ENCODE measurements at regions of chr9 and their contacts with region 1.

Region 1: GRCh38 chr9:128296337-128297220 is 20.5 kb downstream of the SWI5 start:
- DNase-seq: no peak
- ATAC-seq: no peak
- H3K4me3 ChIP-seq: no peak overlapping the region
- H3K27ac ChIP-seq: no peak overlapping the region
- H3K4me1 ChIP-seq: peaks cover 5 to 29% of the 10 kb centered on the region in 2 experiments; a peak in 3 of 4 replicates
- H3K27me3 ChIP-seq: no peaks in the 10 kb centered on the region
- CTCF ChIP-seq: no peak
- POLR2A ChIP-seq: no peak
- RAD21 ChIP-seq: no peak

Region 2: GRCh38 chr9:128339771-128340690 is 43.5 kb after region 1 on chr9 and contains the start of gene SLC27A4:
- CTCF ChIA-PET with region 1: interaction called, 40 read pairs
- POLR2A ChIA-PET with region 1: interaction called, 9 read pairs
- RAD21 ChIA-PET with region 1: interaction called, 3 to 6 read pairs
- intact Hi-C with region 1: loop called (anchors 1 kb)
- DNase-seq: peak; percentile 71
- ATAC-seq: peak; percentile 87
- H3K4me3 ChIP-seq: peak within 1 kb of the TSS; percentile 84 to 86
- H3K27ac ChIP-seq: peak within 1 kb of the TSS; percentile 74
- H3K4me1 ChIP-seq: peaks cover 0 to 20% of the 10 kb centered on the region in 2 experiments; a peak in 2 of 4 replicates
- H3K27me3 ChIP-seq: no peaks in the 10 kb centered on the region
- CTCF ChIP-seq: no peak
- POLR2A ChIP-seq: no peak
- RAD21 ChIP-seq: no peak
- total RNA-seq, gene SLC27A4: 33.9 TPM

Region 3: GRCh38 chr9:128370826-128371621 is 74.4 kb after region 1 on chr9 and contains the start of gene URM1:
- CTCF ChIA-PET with region 1: interaction called, 15 read pairs
- POLR2A ChIA-PET with region 1: no interaction called
- RAD21 ChIA-PET with region 1: no interaction called
- intact Hi-C with region 1: no loop called
- DNase-seq: peak; percentile 88
- ATAC-seq: peak; percentile 89
- H3K4me3 ChIP-seq: peak within 1 kb of the TSS; percentile 67 to 91
- H3K27ac ChIP-seq: peak within 1 kb of the TSS; percentile 79
- H3K4me1 ChIP-seq: peaks cover 13 to 16% of the 10 kb centered on the region in 2 experiments; a peak in 3 of 4 replicates
- H3K27me3 ChIP-seq: no peaks in the 10 kb centered on the region
- CTCF ChIP-seq: no peak
- POLR2A ChIP-seq: peak; percentile 74
- RAD21 ChIP-seq: no peak
- total RNA-seq, gene URM1: 51.6 TPM

Region 4: DNA sequence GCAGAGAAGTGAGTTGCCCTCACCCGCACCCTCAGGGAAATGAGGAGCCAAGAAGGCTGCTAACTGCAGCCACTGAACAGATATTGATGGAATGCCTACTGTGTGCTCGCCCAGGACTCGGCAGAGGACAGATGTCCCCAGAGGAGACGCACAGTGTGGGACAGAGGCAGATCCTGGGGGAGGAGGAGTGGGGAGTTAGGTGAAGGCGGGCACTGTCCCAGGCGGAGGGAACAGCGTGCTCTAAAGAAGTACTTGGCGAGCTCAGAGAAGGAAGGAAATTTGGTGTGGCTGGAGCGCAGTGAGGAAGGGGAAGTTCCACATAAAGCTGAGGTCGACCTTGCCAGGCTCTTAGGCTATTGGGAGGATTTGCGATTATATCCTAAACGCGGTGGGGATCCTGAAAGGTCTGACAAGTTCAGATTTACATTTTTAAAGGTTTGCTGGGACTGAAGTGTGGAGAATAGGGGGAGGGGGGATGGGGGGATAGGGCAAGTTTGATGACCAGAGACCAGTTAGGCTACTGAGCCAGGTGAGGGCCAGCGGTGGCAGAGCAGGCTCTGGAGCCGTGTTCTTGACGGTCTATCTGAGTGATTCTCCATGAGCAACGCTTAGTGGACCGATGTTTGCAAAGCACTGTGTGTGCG is 100.5 kb after region 1 on chr9:
- CTCF ChIA-PET with region 1: no interaction called
- POLR2A ChIA-PET with region 1: no interaction called
- RAD21 ChIA-PET with region 1: no interaction called
- intact Hi-C with region 1: no loop called
- DNase-seq: no peak
- ATAC-seq: no peak
- H3K4me3 ChIP-seq: no peak overlapping the region
- H3K27ac ChIP-seq: no peak overlapping the region
- H3K4me1 ChIP-seq: peaks cover 0 to 14% of the 10 kb centered on the region in 2 experiments; a peak in 2 of 4 replicates
- H3K27me3 ChIP-seq: no peaks in the 10 kb centered on the region
- CTCF ChIP-seq: no peak
- POLR2A ChIP-seq: no peak
- RAD21 ChIP-seq: no peak

Region 5: GRCh38 chr9:128420060-128420650 is 123.6 kb after region 1 on chr9:
- CTCF ChIA-PET with region 1: interaction called, 10 read pairs
- POLR2A ChIA-PET with region 1: interaction called, 4 read pairs
- RAD21 ChIA-PET with region 1: interaction called in 1 of 2 experiments, 3 read pairs
- intact Hi-C with region 1: no loop called
- DNase-seq: no peak
- ATAC-seq: peak; percentile 81
- H3K4me3 ChIP-seq: peak overlapping the region; percentile 79 to 93
- H3K27ac ChIP-seq: peak overlapping the region; percentile 78
- H3K4me1 ChIP-seq: peaks cover 31 to 51% of the 10 kb centered on the region in 2 experiments
- H3K27me3 ChIP-seq: no peaks in the 10 kb centered on the region
- CTCF ChIP-seq: peak in 2 of 3 experiments; percentile 78 to 80; a peak in 4 of 6 replicates
- POLR2A ChIP-seq: peak; percentile 18
- RAD21 ChIP-seq: no peak

Region 6: DNA sequence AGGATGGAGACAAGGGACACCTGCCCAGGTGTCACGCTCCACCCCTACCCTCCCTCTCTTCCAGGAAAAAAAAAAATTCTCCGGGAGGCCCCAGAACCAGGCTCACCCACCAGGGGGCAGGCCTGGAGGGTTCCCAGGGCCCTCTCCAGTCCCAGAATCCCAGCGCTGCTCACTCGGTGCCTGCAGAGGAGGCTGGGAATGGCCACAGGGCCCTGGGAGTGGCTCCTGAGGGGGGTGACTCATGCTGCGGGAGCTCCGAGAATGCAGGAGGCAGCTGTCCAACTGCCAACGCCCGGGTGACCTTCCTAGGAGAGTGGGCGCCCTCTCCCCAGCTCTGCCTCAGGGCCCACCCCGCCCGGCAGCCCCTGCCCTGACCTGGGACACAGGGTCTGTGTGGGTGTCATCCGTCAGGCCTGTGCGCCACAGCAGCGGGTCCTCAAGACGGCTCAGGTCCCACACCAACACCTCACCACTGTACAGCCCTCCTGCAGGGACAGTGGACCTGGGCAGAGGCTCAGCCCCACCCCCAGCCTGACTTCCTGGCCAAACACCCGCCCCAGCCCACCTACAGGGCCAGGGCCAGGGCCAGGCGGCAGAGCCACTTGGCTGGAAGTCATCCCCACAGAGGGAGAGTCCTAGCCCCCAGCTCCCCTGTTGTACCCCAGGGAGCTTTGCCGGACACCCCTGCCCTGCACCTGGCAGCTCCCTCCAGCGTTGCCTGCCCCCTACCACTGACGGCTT is 338.9 kb after region 1 on chr9:
- CTCF ChIA-PET with region 1: interaction called, 6 read pairs
- POLR2A ChIA-PET with region 1: no interaction called
- RAD21 ChIA-PET with region 1: no interaction called
- intact Hi-C with region 1: loop called (anchors 5 kb)
- DNase-seq: peak; percentile 94
- ATAC-seq: peak; percentile 90
- H3K4me3 ChIP-seq: peak overlapping the region; percentile 35 to 53
- H3K27ac ChIP-seq: peak overlapping the region; percentile 99
- H3K4me1 ChIP-seq: peaks cover 28 to 46% of the 10 kb centered on the region in 2 experiments
- H3K27me3 ChIP-seq: no peaks in the 10 kb centered on the region
- CTCF ChIP-seq: peak in 2 of 3 experiments; percentile 85 to 95; a peak in 4 of 6 replicates
- POLR2A ChIP-seq: no peak
- RAD21 ChIP-seq: no peak